Posterior cingulate gyrus (tissue), 11 donors: ENCODE measurements at regions of chr12 and their contacts with region 1.

Region 1: DNA sequence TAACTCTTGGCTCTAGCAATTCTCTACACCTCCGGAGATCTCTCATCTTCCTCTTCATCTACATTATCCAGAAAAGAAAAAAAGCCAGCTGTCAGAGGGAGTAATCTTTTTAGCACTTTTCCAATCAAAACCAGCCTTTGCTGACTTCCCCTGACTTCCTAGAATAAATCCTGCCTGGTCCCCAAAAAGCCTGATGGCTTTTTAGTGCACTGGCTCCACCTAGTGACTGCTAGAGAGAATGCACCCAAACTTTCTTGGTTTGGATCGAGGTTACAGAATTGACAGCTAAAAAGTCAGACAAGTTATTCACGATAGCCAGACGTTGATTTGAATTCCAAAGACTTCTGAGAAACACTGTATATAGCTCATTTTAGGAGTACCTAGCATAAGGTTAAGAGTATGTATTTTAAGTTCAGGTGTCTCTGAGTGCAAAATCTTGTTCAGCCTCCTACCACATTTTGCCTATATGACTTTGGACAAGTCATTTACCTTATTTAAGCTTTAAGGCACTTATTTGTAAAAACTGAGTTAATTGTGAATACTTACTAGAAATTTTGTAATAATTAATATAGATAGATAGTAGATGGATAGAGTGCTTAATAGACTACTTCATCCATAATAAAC is 185.7 kb upstream of the GRIN2B start:
- DNase-seq: peak in 7 of 10 donors; percentile 21 to 90 (median 61)

Region 2: GRCh38 chr12:13278249-13278787 is 888.8 kb before region 1 on chr12:
- intact Hi-C with region 1: loop called (anchors 1 kb)
- DNase-seq: peak; percentile 57 to 97 (median 78)

Region 3: DNA sequence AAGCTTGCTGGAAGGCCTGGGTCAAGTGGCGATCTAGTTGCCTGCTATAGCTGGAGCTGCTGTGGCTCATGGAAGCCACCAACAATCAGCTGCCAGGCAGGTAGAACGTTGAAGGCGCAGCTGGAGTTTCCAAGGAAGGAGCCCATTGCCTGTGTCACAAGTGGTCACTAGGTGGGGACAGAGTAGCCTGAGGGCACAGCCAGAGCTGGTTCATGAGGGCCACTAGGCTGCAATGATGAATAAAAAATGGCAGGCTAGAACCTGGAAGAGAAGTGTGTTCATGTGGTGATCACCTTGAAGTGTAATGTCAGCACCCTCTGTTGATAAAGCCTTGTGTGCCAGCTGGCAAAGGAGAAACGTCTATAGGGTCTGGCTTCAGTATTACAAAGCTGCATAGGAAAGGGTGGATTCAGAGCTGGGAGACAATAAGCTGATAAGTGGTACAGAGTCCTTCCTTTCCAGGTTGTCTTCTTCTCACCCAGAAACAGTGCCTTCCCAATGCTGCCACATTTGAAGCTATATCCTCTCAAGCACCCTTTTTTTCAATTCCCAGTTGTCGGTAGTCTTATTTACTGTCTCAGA is 804.8 kb before region 1 on chr12:
- intact Hi-C with region 1: loop called (anchors 5 kb)
- DNase-seq: peak in 7 of 10 donors; percentile 38 to 90 (median 71)

Region 4: DNA sequence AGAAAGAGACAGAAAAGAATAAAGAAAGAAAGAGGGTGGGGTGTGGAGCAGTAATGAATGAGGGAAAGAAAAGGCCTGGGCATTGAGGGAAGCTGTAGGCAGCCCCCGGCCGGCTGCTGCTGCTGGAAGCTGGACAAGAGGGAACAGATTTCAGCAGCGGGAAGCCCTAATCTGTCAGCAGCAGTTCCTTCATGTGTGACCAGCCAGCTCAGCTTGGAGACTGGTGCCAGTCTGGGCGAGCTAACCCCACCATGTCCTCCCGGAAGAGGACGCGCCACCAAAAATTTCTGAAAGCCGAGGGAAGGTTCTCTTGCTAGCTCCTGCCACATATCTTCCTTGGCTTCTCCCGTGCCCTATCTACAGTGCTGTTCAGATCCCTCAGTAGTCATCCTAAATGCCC is 422.6 kb before region 1 on chr12:
- intact Hi-C with region 1: loop called (anchors 2 kb)
- DNase-seq: peak in 6 of 10 donors; percentile 19 to 83 (median 58)

Region 5: GRCh38 chr12:13959131-13959723 is 207.9 kb before region 1 on chr12:
- intact Hi-C with region 1: loop called (anchors 5 kb)
- DNase-seq: peak in 4 of 10 donors; percentile 16 to 87 (median 86)

Region 6: DNA sequence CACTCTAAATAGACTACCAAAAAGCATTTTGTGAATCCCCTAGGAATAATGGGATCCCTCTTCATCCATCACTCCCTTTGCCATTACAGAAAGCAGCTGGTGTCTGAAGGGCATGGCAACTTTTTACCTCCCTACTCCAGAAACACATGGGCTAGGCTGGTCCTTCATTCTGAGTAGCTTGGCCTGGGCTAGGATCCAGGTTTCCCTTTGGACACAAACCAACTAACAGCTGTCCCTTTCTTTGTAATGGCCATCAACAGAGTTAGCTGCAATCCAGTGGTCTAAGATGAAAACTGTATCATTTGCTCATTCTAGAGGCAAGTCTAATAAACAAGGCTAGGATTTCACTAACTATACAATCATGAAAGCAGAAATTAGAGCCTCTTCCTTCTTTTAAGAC is 193.1 kb before region 1 on chr12:
- intact Hi-C with region 1: loop called (anchors 2 kb)
- DNase-seq: no peak